Endothelial cell of umbilical vein (primary cell): ENCODE measurements at regions of chr9 and their contacts with region 1.

Region 1: GRCh38 chr9:121376214-121376830 is 6.3 kb upstream of the STOM start:
- DNase-seq: peak; percentile 51
- H3K4me3 ChIP-seq: no peak overlapping the region
- H3K27ac ChIP-seq: no peak overlapping the region
- H3K4me1 ChIP-seq: no peaks in the 10 kb centered on the region
- H3K27me3 ChIP-seq: no peaks in the 10 kb centered on the region
- CTCF ChIP-seq: peak in 1 of 2 donors; percentile 17
- POLR2A ChIP-seq: no peak

Region 2: DNA sequence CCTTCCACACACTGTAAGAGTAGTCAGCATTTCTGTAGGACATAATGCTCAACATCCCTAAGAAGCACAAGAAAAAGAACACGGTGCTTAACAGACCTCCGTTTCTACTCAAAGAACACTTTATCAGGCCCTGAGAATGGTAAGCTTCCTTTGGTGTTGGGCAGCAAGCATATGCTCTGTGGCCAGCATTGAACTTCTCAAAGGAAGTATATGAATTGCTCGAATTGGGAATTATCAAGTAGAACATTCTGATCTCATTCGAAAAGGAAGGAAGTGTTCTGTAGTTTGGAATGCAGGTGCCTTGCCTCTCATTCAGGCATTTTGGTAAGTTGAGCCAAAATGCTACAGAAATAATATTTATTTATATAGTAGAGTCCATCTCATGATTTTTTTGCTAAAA is 387.3 kb before region 1 on chr9:
- CTCF ChIA-PET with region 1: no interaction called
- POLR2A ChIA-PET with region 1: no interaction called
- dilution Hi-C with region 1: no loop called
- intact Hi-C with region 1: no loop called
- DNase-seq: peak; percentile 39
- H3K4me3 ChIP-seq: no peak overlapping the region
- H3K27ac ChIP-seq: no peak overlapping the region
- H3K4me1 ChIP-seq: peaks cover 17% of the 10 kb centered on the region
- H3K27me3 ChIP-seq: no peaks in the 10 kb centered on the region
- CTCF ChIP-seq: no peak
- POLR2A ChIP-seq: no peak

Region 3: DNA sequence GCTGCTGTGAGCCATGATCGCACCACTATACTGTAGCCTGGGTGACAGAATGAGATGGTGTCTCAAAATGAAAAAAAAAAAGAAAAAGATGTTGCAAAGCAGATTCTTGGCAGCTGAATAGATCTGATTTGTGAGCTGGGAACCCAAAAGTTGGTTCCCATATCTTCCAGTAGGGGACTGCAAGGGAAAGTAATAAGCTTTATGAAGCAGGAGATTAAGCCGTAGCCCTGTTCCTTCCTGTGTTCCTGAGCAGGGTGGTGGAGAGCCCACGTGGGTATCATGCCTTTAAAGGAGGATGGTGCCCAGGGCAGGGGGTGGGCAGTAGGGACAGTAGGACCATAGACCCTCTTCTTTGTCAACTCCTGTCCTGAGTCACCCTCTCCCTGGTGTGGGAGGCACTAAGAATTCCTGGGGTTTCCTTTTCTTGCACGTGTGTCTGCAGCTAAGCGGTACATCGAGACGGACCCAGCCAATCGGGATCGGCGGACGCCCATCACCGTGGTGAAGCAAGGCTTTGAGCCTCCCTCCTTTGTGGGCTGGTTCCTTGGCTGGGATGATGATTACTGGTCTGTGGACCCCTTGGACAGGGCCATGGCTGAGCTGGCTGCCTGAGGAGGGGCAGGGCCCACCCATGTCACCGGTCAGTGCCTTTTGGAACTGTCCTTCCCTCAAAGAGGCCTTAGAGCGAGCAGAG is 44.2 kb before region 1 on chr9:
- CTCF ChIA-PET with region 1: interaction called, 15 read pairs
- POLR2A ChIA-PET with region 1: no interaction called
- dilution Hi-C with region 1: no loop called
- intact Hi-C with region 1: no loop called
- DNase-seq: peak; percentile 36
- H3K4me3 ChIP-seq: no peak overlapping the region
- H3K27ac ChIP-seq: no peak overlapping the region
- H3K4me1 ChIP-seq: no peaks in the 10 kb centered on the region
- H3K27me3 ChIP-seq: no peaks in the 10 kb centered on the region
- CTCF ChIP-seq: peak; percentile 10 to 39
- POLR2A ChIP-seq: no peak

Region 4: GRCh38 chr9:121350993-121351561 is 25.2 kb before region 1 on chr9:
- CTCF ChIA-PET with region 1: interaction called, 34 read pairs
- POLR2A ChIA-PET with region 1: no interaction called
- dilution Hi-C with region 1: no loop called
- intact Hi-C with region 1: no loop called
- DNase-seq: peak; percentile 98
- H3K4me3 ChIP-seq: no peak overlapping the region
- H3K27ac ChIP-seq: peak overlapping the region; percentile 66
- H3K4me1 ChIP-seq: peaks cover 52% of the 10 kb centered on the region
- H3K27me3 ChIP-seq: no peaks in the 10 kb centered on the region
- CTCF ChIP-seq: no peak
- POLR2A ChIP-seq: no peak

Region 5: DNA sequence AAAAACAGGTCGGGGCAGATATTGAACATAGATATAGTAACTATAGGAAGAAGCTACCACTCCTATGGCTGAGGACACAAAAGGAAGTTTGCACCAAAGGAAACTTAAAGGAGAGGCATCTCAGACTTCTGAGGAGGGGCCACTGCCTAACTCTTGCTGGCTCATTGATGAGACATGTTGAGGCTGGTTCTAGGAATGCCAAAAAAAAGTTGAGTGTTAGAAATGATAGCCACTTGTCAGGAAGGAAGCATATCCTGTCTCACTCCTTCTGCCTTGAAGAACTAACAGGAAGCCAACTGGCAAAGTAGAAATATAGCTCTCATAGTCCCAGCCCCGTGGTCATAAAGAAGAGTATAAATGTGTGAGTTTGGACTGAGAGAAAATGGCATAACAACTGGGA is 17.0 kb after region 1 on chr9:
- CTCF ChIA-PET with region 1: interaction called, 45 read pairs
- POLR2A ChIA-PET with region 1: no interaction called
- dilution Hi-C with region 1: no loop called
- intact Hi-C with region 1: no loop called
- DNase-seq: peak; percentile 47
- H3K4me3 ChIP-seq: no peak overlapping the region
- H3K27ac ChIP-seq: no peak overlapping the region
- H3K4me1 ChIP-seq: peaks cover 28% of the 10 kb centered on the region
- H3K27me3 ChIP-seq: no peaks in the 10 kb centered on the region
- CTCF ChIP-seq: no peak
- POLR2A ChIP-seq: peak; percentile 37